Caco-2 (cell line): ENCODE measurements at regions of chr9 and their contacts with region 1.

Region 1: GRCh38 chr9:119435066-119435465 is 65.8 kb upstream of the BRINP1 start:
- DNase-seq: no peak
- H3K4me3 ChIP-seq: no peak overlapping the region
- H3K4me3 Mint-ChIP-seq: no peak overlapping the region
- H3K27ac Mint-ChIP-seq: no peak overlapping the region
- H3K4me1 ChIP-seq: no peaks in the 10 kb centered on the region; the same call in 1 of the 2 replicates
- H3K4me1 Mint-ChIP-seq: peaks cover 8% of the 10 kb centered on the region
- H3K27me3 ChIP-seq: no peaks in the 10 kb centered on the region
- H3K27me3 Mint-ChIP-seq: no peaks in the 10 kb centered on the region
- CTCF ChIP-seq: no peak

Region 2: GRCh38 chr9:119289740-119290433 is 145.2 kb before region 1 on chr9:
- CTCF ChIA-PET with region 1: no interaction called
- POLR2A ChIA-PET with region 1: no interaction called
- intact Hi-C with region 1: no loop called
- DNase-seq: peak; percentile 46 to 63
- H3K4me3 ChIP-seq: no peak overlapping the region
- H3K4me3 Mint-ChIP-seq: no peak overlapping the region
- H3K27ac Mint-ChIP-seq: no peak overlapping the region
- H3K4me1 ChIP-seq: no peaks in the 10 kb centered on the region
- H3K4me1 Mint-ChIP-seq: no peaks in the 10 kb centered on the region
- H3K27me3 ChIP-seq: no peaks in the 10 kb centered on the region
- H3K27me3 Mint-ChIP-seq: peaks cover 5% of the 10 kb centered on the region
- CTCF ChIP-seq: peak; percentile 57 to 60

Region 3: GRCh38 chr9:119412399-119412798 is 22.7 kb before region 1 on chr9:
- CTCF ChIA-PET with region 1: no interaction called
- POLR2A ChIA-PET with region 1: no interaction called
- intact Hi-C with region 1: loop called (anchors 2 kb)
- DNase-seq: peak; percentile 9 to 75
- H3K4me3 ChIP-seq: no peak overlapping the region
- H3K4me3 Mint-ChIP-seq: no peak overlapping the region
- H3K27ac Mint-ChIP-seq: no peak overlapping the region
- H3K4me1 ChIP-seq: no peaks in the 10 kb centered on the region
- H3K4me1 Mint-ChIP-seq: no peaks in the 10 kb centered on the region
- H3K27me3 ChIP-seq: no peaks in the 10 kb centered on the region
- H3K27me3 Mint-ChIP-seq: peaks cover 8% of the 10 kb centered on the region
- CTCF ChIP-seq: no peak